ENCODE measurements at regions of chrX and their contacts with region 1.

Region 1: DNA sequence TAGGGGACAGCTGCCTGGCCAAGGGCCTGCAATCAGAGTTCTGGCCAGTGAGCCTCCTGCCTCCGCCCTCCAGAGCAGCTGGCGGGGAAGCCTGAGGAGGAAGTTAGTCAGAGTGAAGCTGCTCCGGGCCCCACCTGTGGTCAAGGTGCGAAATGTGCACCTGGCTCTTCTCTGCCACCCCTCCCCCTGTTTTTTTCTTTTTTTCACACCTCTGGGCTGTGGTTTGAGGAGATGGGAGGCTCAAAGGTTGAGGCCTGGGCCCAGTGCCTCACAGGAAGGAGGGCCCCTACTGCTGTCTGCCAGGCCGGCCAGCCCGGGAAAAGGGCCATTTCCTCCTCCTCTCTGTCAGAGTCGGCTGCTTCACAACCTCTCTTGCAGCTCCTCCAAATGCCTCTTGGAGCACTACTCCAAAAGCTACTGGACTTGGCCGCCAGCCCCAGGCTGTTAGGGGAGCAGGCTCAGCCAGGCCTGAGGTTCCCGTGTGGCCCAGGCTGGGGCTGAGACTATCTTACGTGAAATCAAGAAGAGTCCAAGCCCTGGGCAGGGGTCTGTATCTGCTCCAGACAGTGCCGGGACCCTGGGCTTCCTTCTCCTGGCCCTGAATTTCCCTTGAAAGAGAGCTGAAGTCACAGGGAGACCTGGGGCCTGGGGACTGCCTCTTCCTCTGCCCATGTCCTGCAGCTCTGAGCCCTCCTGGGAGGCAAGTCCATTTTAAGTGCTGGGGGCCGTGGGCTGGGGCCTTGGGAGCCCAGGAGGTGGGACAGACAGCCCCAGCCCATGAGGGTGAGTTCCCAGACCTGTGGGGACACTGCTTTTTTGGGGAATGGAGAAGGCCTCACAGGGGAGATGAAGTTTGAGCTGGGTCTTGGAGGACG is 4.5 kb upstream of the CXCR3 start:
- DNase-seq: peak; percentile 88
- H3K4me3 Mint-ChIP-seq: peak overlapping the region; percentile 26
- H3K27ac Mint-ChIP-seq: peak overlapping the region; percentile 86
- H3K4me1 Mint-ChIP-seq: peaks cover 59% of the 10 kb centered on the region
- H3K27me3 Mint-ChIP-seq: no peaks in the 10 kb centered on the region

Region 2: DNA sequence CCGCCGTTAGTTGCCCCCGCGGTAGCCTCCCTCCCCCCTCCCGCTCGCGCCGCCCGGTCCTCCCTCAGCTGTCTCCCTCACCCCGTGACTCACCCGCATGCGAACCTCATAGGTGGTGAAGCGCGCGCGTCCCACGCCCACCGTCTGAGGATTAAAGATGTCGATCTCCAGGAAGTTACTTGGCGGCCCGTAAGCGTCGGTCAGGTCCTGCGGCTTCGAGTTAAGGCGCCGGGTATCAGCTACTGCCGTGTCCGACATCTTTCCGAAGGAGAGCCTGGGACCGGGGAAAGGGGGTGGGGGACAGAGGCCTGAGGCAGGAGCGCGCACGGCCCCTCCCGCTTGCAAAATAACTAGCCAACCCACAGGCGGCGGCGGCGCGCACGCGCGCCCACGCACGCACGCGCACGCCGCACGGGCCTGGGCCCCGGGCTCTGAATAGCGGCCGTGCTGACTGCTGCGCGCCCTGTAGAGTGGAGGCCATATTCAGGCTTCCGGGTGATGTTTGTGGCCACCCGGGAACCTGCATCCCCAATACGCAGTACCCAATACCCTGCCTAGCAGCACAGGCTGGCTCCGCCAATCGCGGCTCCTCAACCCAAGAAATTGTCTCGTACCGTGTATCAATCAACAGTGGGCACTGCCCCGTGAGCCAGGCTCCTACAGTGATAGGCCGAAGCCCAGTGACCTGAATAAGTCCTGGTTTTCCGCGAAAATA is 554.6 kb before region 1 on chrX and contains the start of gene SNX12:
- CTCF ChIA-PET with region 1: no interaction called
- intact Hi-C with region 1: loop called (anchors 1 kb)
- DNase-seq: peak; percentile 93
- H3K4me3 Mint-ChIP-seq: peak within 1 kb of the TSS; percentile 96
- H3K27ac Mint-ChIP-seq: peak within 1 kb of the TSS; percentile 94
- H3K4me1 Mint-ChIP-seq: peaks cover 19% of the 10 kb centered on the region
- H3K27me3 Mint-ChIP-seq: no peaks in the 10 kb centered on the region
- total RNA-seq, gene SNX12: 32.9 to 35.2 TPM

Region 3: DNA sequence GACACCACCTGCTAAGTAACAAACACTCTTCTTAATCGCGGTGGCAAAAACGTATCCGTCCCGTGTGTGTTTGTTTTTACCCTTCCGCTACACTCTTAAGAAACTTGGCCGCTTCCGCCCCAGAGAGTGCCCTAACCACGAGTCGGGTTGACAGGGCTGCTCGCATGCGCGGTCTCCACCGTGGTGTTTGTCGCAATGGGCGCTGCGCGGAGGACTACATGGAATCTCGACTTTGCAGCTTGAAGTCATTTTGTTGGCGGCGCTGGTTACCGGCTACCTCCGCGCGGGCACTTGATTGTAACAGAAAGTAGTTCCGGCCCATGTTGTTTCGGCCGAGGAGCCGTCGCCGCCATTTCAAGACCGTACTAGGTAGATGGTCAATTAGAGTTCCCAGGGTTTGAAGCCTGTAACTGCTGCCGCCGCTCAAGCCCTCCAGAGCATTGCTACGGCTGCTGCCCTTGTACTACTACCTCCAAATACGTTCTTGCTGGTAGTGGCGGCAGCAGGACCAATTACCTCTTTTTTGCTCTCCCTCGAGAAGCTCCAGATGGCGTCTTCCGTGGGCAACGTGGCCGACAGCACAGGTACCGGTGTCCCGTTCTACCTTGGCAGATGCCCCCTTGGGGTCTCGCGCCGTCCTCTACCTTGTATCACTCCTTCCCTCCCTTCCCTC is 89.9 kb before region 1 on chrX and contains the start of gene OGT:
- CTCF ChIA-PET with region 1: no interaction called
- intact Hi-C with region 1: loop called (anchors 1 kb)
- DNase-seq: peak; percentile 96
- H3K4me3 Mint-ChIP-seq: peak within 1 kb of the TSS; percentile 96
- H3K27ac Mint-ChIP-seq: peak within 1 kb of the TSS; percentile 98
- H3K4me1 Mint-ChIP-seq: peaks cover 30% of the 10 kb centered on the region
- H3K27me3 Mint-ChIP-seq: no peaks in the 10 kb centered on the region
- total RNA-seq, gene OGT: 307 to 323 TPM

Region 4: DNA sequence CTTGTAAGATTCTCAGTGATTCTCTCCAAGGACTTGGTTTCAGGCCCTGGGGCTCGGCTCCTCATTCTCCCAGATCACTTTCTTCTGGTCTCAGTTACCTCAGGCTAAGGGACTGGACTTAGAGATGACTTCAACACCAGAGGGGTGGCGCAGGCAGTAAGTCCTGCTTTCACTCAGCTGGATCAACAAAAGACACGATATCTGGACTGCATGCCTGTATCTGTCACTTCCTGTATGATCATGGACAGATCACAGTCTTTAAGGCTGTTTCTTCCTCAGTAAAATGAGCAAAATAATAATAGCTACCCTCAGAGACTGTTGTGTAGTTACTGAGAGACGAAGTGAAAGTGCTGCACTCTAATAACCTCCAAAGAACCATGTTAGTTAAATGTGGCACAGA is 15.0 kb after region 1 on chrX:
- CTCF ChIA-PET with region 1: interaction called, 9 read pairs
- intact Hi-C with region 1: loop called (anchors 1 kb)
- DNase-seq: no peak
- H3K4me3 Mint-ChIP-seq: no peak overlapping the region
- H3K27ac Mint-ChIP-seq: no peak overlapping the region
- H3K4me1 Mint-ChIP-seq: peaks cover 17% of the 10 kb centered on the region
- H3K27me3 Mint-ChIP-seq: no peaks in the 10 kb centered on the region

Region 5: DNA sequence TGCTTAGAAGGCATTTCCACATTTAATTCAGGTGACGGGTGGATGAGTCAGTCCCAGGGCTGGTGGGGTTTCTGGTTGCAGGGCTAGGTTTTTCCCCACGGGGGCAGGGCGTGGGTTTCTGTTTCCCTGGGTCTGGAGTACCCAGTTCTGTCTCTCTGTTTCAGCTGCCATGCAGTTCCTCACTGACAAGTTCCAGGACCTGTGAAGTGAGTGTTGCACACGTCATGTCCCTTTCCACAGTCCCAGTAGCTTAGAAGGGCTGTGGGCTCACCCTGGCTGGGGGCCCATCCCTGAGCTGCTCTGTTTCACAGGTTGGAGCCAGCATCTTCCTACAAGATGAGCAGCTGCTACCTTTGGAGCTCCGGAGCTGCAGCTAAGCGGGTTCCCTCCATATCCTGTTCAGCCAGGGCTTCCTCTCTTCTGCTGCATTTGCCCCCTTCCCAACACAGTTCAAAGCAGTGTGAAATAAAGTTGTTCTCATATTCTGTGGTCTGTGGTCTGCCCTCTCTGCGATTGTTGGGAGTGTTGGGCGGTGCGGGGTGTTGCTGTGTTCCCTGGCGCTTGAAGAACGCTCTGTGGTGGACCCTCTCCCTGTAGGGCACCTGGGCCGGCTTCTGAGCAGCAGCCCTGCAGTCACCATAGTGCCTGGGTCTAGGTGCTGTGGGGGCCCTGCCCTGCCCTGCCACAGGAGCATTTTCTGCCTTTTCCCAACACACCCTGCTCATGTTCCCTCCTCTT is 48.4 kb after region 1 on chrX:
- CTCF ChIA-PET with region 1: no interaction called
- intact Hi-C with region 1: loop called (anchors 1 kb)
- DNase-seq: peak; percentile 80
- H3K4me3 Mint-ChIP-seq: no peak overlapping the region
- H3K27ac Mint-ChIP-seq: no peak overlapping the region
- H3K4me1 Mint-ChIP-seq: peaks cover 20% of the 10 kb centered on the region
- H3K27me3 Mint-ChIP-seq: peaks cover 3% of the 10 kb centered on the region